GM12878 (cell line): ENCODE measurements at regions of chr5 and their contacts with region 1.

Region 1: DNA sequence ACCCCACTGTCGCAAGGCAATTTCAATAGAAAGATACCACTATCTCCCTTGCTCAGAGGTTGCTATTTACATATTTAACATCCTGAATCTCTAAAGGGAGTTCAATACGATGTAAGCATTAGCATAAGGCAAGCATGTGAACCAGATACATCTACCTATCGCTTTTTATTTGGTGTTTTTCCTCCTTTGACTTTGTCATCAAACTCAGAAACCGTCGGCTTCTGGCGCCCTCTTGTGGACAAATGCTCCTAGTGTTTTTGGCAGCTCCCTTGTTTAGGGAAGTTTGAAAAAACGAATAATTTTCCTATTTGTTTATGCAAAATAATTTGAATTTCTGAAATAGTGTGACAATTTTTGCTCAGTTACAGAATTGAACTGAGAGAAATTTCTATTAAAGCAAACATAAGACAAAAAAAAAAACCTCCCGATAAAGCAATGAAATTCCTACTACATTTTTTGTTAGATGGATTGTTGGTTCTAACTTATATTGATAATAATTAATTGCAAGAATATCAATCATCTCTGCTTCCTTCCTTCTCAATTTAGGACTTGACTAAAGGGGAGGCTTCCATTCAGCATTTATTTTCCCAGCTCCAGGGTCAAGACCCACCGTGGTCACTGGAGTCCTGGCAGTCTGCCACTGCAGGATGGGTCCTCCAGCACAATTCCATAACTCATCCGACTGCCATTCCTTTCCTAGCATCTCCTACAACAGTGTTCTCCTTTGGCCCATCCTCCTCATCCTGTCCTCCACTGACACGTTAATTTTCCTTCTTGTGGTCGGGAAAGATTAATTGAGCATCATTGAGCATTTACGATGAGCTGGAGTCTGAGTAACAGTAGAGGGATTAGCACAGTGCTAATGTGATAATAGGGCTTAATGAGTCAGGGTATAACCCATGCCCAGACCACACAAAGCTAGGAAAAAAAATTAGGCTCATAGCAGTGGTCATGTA is 131.8 kb upstream of the CHD1 start:
- DNase-seq: peak; percentile 34
- ATAC-seq: peak; percentile 79
- H3K4me3 ChIP-seq: peak overlapping the region; percentile 0; the same call in 1 of the 2 replicates
- H3K27ac ChIP-seq: no peak overlapping the region
- H3K4me1 ChIP-seq: peaks cover 18% of the 10 kb centered on the region
- H3K27me3 ChIP-seq: no peaks in the 10 kb centered on the region
- CTCF ChIP-seq: peak; percentile 76 to 87 (median 82)
- EP300 ChIP-seq: no peak
- POLR2A ChIP-seq: no peak
- RAD21 ChIP-seq: peak; percentile 95

Region 2: DNA sequence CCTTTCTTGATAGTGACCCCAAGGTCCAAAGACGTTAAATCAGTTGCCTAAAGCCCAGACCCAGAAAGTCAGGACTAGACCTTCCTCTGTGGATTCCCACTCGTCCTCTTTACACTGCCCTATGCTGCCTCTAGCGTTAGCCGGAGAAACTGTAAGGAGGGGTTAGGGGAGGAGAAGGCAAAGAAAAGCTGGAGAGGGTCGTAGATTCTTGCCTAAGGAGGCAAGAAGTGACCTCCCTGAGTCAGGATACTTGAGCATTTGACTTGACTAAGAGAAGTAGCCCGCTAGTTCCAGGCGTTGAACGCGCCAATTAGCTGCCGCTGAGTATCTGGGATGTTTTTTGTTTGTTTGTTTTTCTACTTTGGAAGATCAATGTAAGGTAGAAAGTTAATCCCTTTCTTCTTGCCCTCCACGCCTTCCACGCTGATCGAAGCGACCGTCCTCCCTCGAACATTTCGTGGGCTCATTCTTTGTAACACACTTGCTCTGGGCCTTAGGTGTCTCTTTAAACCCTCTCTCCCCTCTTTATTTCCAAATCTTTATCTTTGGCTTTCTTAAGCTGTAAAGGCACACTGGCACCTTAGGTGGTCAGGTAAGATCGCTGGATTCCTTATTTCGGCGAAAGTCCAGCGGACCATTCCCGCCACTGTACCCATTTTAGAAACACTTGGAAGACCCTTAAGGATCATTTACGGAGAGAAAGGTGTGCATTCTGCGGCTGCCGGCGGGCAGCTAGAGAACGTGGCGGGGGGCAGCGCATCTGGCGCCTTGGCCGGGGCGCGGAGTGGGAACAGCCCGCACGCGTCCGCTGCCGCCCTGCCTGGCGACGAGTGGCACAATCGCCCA is 292.2 kb before region 1 on chr5:
- CTCF ChIA-PET with region 1: interaction called, 18 read pairs
- POLR2A ChIA-PET with region 1: no interaction called
- RAD21 ChIA-PET with region 1: interaction called, 11 read pairs
- SMC1A ChIA-PET with region 1: interaction called, 15 read pairs
- in situ Hi-C with region 1: no loop called
- intact Hi-C with region 1: loop called (anchors 2 kb)
- DNase-seq: no peak
- ATAC-seq: peak; percentile 37
- H3K4me3 ChIP-seq: peak overlapping the region; percentile 79
- H3K27ac ChIP-seq: no peak overlapping the region
- H3K4me1 ChIP-seq: peaks cover 12% of the 10 kb centered on the region
- H3K27me3 ChIP-seq: peaks cover 3 to 9% of the 10 kb centered on the region in 2 experiments; a peak in 3 of 4 replicates
- CTCF ChIP-seq: peak; percentile 82 to 98 (median 93)
- EP300 ChIP-seq: no peak
- POLR2A ChIP-seq: no peak
- RAD21 ChIP-seq: peak; percentile 89

Region 3: DNA sequence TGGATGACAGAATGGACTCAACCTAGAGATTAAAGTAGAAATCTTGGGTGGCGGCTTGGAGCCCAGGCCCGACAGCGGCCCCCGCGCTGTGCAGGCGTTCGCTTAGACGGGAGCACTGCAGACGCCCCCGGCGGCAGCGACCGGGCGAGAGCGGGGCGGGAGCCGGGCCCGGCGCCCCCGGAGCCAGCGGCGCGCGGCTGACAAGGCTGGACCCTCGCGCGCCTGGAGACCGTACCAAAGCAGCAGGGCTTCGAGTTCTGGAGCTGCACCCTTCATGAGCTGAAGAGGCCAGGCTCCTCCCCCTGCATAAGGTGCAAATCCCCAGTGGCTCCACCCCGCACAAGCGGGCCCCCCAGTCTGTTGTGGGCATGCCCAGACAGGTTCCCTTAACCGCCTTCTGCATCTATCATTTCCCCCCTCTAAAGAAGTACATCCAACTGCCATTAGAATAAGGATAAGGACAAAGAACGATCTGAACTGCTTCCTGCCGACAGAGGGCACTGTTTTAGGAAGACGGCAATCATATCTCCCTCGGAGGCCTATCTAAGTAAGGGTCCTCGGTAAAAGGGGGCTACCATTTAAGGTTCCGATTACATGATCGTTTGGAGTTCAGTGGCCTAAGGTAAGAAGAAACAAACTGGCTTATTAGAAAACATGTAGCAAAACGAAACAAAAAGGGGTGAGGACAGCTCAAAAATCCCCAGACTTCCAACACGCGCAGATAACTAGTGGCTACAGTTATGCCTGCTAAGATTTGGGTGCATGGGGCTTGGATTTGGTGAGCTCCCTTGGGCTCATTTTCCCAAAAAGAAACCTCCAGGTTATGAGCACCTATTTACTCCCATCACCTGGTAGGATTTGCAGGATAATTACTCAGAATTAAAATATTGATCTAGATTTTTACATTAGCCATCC is 220.9 kb before region 1 on chr5:
- CTCF ChIA-PET with region 1: interaction called, 18 read pairs
- POLR2A ChIA-PET with region 1: no interaction called
- RAD21 ChIA-PET with region 1: interaction called, 4 read pairs
- SMC1A ChIA-PET with region 1: interaction called, 5 read pairs
- in situ Hi-C with region 1: no loop called
- intact Hi-C with region 1: loop called (anchors 1 kb)
- DNase-seq: no peak
- ATAC-seq: peak; percentile 43; the same call in 1 of the 3 replicates
- H3K4me3 ChIP-seq: no peak overlapping the region
- H3K27ac ChIP-seq: no peak overlapping the region
- H3K4me1 ChIP-seq: no peaks in the 10 kb centered on the region
- H3K27me3 ChIP-seq: no peaks in the 10 kb centered on the region
- CTCF ChIP-seq: peak; percentile 11 to 24 (median 14); a peak in 2 of 6 replicates
- EP300 ChIP-seq: no peak
- POLR2A ChIP-seq: no peak
- RAD21 ChIP-seq: no peak

Region 4: DNA sequence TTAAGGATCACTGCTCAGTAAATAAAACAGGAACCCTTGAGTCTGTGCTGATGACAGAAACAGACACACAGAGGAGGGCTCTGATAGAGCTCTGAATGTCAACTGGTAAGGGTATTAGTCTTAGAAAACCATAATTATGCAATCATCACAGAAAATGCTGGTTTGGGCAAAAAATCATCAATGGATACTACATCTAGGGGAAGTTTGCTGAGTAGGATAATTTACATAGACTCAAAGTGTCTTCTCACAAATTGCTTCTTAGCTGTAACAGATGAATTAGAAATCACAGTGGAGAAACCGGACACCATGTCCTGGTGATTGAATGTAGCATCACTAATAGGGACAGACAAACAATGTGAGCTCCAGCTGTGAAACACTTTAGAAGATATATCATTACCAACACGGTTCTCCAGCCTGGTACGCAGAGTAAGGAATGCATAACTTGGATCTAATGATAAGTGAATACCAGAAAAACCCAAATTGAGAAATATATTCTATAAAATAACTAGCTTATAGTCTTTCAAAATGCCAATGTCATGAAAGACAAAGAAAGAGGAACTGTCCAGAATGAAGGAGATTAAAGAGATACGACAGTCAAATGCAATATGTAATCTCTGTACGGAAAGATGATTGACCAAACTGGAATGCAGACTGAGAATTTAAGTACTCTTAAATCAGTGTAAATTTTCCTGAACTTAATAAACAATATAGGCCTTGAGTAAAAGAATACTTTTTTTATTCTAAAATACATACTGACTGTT is 149.1 kb before region 1 on chr5:
- CTCF ChIA-PET with region 1: interaction called, 34 read pairs
- POLR2A ChIA-PET with region 1: interaction called, 3 read pairs
- RAD21 ChIA-PET with region 1: interaction called, 38 read pairs
- SMC1A ChIA-PET with region 1: interaction called, 15 read pairs
- in situ Hi-C with region 1: no loop called
- intact Hi-C with region 1: loop called (anchors 1 kb)
- DNase-seq: no peak
- ATAC-seq: peak; percentile 22; the same call in 2 of the 3 replicates
- H3K4me3 ChIP-seq: no peak overlapping the region
- H3K27ac ChIP-seq: no peak overlapping the region
- H3K4me1 ChIP-seq: no peaks in the 10 kb centered on the region; the same call in 1 of the 2 replicates
- H3K27me3 ChIP-seq: no peaks in the 10 kb centered on the region
- CTCF ChIP-seq: no peak
- EP300 ChIP-seq: no peak
- POLR2A ChIP-seq: no peak
- RAD21 ChIP-seq: no peak

Region 5: DNA sequence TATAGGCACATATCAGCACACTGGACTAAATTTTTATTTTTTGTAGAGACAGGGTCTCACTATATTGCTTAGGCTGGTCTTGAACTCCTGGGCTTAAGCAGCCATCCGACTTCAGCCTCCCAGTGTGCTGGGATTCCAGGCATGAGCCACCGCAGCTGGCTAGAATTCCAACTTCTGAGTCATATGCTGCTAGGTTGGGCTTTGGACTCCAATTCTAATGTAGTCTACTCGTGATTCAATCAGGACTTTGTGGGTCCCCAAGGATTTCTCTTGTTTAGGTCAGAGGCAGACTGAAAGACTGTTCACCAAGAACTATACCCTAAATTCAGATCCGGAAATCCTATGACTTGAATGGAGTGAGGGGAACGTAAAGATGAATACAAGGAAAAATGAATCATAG is 63.6 kb before region 1 on chr5:
- CTCF ChIA-PET with region 1: no interaction called
- POLR2A ChIA-PET with region 1: no interaction called
- RAD21 ChIA-PET with region 1: no interaction called
- SMC1A ChIA-PET with region 1: no interaction called
- in situ Hi-C with region 1: no loop called
- intact Hi-C with region 1: no loop called
- DNase-seq: no peak
- ATAC-seq: no peak
- H3K4me3 ChIP-seq: no peak overlapping the region
- H3K27ac ChIP-seq: no peak overlapping the region
- H3K4me1 ChIP-seq: no peaks in the 10 kb centered on the region
- H3K27me3 ChIP-seq: no peaks in the 10 kb centered on the region
- CTCF ChIP-seq: no peak
- EP300 ChIP-seq: no peak
- POLR2A ChIP-seq: no peak
- RAD21 ChIP-seq: no peak

Region 6: DNA sequence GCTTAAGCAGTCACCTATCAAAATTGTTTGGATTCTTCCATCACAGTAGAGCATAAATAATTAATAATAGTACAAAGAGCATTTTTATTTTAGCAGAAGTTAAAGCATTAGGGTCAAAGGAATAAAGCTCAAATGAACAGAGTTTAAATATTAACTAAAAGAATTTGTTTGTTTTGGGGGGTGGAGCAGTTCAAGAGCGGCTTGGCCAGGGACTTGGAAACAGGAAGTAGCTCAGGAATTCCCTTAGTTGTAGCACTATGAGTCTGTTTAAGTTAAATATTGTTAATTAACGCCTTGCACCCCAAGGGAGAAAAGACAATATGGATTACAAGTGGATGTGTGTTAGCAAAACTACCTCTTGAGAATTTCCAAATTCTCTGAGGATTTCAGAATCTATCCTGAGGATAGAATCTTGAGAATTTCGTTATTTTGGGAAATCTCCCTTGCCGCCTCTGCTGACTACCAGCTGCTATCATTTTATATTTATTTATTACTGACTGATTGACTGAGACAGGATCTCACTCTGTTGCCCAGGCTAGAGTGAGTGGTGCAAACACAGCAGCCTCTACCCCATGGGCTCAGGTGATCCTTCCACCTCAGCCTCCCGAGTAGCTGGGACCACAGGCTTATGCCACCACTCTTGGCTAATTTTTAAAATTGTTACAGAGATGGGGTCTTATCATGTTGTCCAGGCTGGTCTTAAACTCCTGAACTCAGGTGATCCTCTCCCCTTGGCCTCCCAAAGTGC is 35.1 kb before region 1 on chr5:
- CTCF ChIA-PET with region 1: interaction called, 15 read pairs
- POLR2A ChIA-PET with region 1: interaction called, 4 read pairs
- RAD21 ChIA-PET with region 1: interaction called, 20 read pairs
- SMC1A ChIA-PET with region 1: interaction called, 41 read pairs
- in situ Hi-C with region 1: no loop called
- intact Hi-C with region 1: no loop called
- DNase-seq: no peak
- ATAC-seq: no peak
- H3K4me3 ChIP-seq: no peak overlapping the region
- H3K27ac ChIP-seq: peak overlapping the region; percentile 95
- H3K4me1 ChIP-seq: peaks cover 41% of the 10 kb centered on the region
- H3K27me3 ChIP-seq: no peaks in the 10 kb centered on the region
- CTCF ChIP-seq: no peak
- EP300 ChIP-seq: peak in 1 of 2 experiments; percentile 42; a peak in 2 of 4 replicates
- POLR2A ChIP-seq: no peak
- RAD21 ChIP-seq: no peak